ENCODE measurements at regions of chrX and their contacts with region 1.

Region 1: DNA sequence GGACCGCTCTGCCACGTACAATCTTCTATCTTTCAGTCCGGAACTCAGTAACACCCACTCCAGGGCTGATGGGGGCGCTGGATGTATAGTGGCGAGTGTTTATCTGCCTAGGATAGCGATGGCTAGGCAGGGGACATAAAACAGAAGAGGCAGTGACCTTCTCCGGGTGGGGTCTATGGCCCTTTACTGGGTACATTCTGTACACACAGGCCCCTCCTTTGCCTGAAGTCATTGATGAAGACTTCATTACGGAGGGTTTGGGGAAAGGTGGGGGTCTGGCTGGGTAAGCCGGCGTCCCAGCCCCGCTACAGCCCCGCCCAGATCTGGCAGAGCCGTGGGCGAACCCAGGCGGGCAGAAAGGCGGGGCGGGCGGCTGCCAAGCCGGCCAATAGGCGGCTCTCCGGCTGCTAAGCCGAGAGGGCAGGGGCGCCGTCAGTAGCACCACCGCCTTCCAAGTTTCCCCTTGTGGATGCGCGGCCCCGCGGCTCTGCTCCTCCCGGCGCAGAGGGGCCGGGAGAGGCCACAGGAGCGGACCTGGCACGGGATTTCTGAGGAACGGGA is at the start of gene CHST7:
- DNase-seq: peak; percentile 69
- H3K4me3 ChIP-seq: peak within 1 kb of the TSS; percentile 48 to 66 (median 54)
- H3K27ac ChIP-seq: peak within 1 kb of the TSS; percentile 72 to 81 (median 78)
- H3K4me1 ChIP-seq: peaks cover 0 to 14% (median 10%) of the 10 kb centered on the region in 4 donors
- H3K27me3 ChIP-seq: peaks cover 7% of the 10 kb centered on the region
- CTCF ChIP-seq: peak in 1 of 5 experiments; percentile 7
- EP300 ChIP-seq: no peak
- POLR2A ChIP-seq: peak; percentile 30
- total RNA-seq, gene CHST7: 4.9 to 10.3 (median 7.6) TPM

Region 2: GRCh38 chrX:46102360-46102759 is 471.1 kb before region 1 on chrX:
- in situ Hi-C with region 1: no loop called
- intact Hi-C with region 1: loop called (anchors 5 kb)
- DNase-seq: no peak
- H3K4me3 ChIP-seq: no peak overlapping the region
- H3K27ac ChIP-seq: no peak overlapping the region
- H3K4me1 ChIP-seq: no peaks in the 10 kb centered on the region
- H3K27me3 ChIP-seq: no peaks in the 10 kb centered on the region
- CTCF ChIP-seq: no peak
- EP300 ChIP-seq: no peak
- POLR2A ChIP-seq: no peak

Region 3: GRCh38 chrX:46446727-46447378 is 126.6 kb before region 1 on chrX:
- in situ Hi-C with region 1: no loop called
- intact Hi-C with region 1: no loop called
- DNase-seq: peak; percentile 87
- H3K4me3 ChIP-seq: peak overlapping the region; percentile 51 to 78 (median 64)
- H3K27ac ChIP-seq: peak overlapping the region; percentile 73 to 90 (median 82)
- H3K4me1 ChIP-seq: peaks cover 0 to 6% (median 0%) of the 10 kb centered on the region in 4 donors
- H3K27me3 ChIP-seq: no peaks in the 10 kb centered on the region
- CTCF ChIP-seq: no peak
- EP300 ChIP-seq: no peak
- POLR2A ChIP-seq: peak; percentile 73

Region 4: DNA sequence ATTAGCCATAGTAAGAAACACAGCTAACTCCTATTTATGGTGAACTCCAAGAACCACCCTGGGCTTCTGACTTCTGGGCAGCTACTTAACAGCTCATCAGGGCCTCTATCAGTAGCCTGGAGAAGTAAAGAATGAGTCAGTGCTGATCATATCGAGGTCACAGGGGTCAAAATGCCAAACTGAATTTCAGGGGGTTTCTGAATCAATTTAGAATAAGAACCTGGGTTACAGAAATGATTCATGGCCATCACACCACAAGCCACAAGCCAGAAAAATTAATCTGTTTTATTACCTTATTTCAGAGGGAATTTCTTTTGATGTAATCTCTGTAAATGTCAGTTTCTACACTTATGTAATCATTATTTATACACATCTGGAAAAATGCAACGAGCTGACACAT is 64.5 kb after region 1 on chrX:
- in situ Hi-C with region 1: loop called in 1 of 4 experiments (anchors 5 kb)
- intact Hi-C with region 1: no loop called
- DNase-seq: no peak
- H3K4me3 ChIP-seq: no peak overlapping the region
- H3K27ac ChIP-seq: no peak overlapping the region
- H3K4me1 ChIP-seq: no peaks in the 10 kb centered on the region
- H3K27me3 ChIP-seq: no peaks in the 10 kb centered on the region
- CTCF ChIP-seq: no peak
- EP300 ChIP-seq: no peak
- POLR2A ChIP-seq: no peak

Region 5: DNA sequence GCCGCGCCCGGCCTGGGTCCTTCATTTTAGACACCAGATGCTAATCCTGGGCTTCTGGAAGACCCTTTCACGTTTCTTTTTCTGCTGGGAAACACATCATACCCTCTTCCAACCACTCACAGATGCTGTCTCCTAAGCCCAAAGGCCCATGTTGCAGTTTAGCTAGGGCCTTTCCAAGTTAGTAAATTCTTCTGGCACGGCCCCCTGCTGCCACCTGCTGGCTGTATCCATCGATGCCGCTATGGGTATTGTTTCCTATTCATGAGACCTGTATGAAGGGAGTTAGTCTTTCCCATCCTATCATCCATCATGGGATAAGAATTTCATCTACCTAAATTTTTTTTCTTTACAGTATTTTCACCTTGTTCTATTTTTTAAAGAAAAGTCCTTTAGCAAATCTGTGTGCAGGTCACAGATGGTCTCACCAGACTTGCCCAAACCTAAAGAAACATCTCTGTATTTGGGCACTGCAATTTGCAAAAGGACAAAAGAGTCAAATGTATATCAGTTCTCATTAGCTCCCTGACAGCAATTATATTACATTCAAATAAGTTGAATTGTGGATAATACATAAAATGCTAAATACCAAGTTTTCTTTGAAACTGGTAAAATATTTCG is 223.3 kb after region 1 on chrX:
- in situ Hi-C with region 1: loop called in 1 of 4 experiments (anchors 25 kb)
- intact Hi-C with region 1: no loop called
- DNase-seq: peak; percentile 73
- H3K4me3 ChIP-seq: no peak overlapping the region
- H3K27ac ChIP-seq: no peak overlapping the region
- H3K4me1 ChIP-seq: no peaks in the 10 kb centered on the region
- H3K27me3 ChIP-seq: no peaks in the 10 kb centered on the region
- CTCF ChIP-seq: peak; percentile 51 to 71 (median 63)
- EP300 ChIP-seq: no peak
- POLR2A ChIP-seq: no peak

Measured in transverse colon (tissue), 4 donors.